ENCODE measurements at regions of chr17 and their contacts with region 1.

Region 1: DNA sequence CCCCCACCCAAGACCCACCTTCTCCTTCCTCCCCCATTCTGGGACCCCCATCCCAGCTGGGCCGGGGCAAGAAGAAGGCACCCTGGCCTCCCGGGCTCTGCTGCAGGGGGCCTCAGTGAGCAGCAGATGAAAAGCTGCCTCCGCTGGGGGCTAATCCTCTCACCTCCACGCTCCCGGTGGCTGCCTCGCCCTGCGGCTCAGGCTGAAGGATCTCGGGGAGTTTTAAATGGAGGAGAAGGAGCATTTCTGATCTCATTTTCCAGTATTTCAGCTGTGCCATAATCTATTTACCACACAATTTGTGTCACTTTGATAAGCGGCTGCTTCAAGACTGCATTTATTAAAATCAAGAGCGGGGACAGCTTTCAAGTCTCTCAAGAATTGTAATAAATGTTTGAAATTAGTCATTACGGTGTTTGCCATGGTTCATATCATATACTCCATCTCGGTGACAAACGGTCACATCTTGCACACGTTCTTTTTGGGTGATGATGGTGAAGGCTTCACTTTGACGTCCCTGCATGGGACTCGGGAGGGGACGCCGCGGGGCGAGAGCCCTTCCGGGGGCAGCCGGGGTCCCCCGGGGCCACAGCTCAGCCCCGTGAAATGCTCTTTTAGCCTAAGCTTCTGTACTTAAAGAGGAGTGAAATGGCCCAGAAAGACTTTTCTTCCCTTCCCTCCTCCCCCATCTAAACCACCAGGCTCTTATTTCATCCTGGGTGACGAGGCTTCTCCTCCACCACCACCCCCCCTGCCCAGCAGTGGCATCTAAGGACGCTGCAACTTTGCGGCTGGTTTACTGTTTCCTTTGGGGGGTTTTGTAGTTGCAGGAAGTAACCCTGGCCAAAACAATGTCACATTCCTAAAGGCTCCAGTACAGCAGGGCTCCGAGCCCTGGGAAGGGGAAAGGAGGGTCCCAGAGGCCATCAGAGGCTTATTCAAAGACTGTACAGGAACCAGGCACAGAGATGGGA is 313.1 kb upstream of the TNRC6C start:
- DNase-seq: peak; percentile 26 to 84 (median 72)
- ATAC-seq: peak; percentile 86
- H3K4me3 ChIP-seq: peak overlapping the region; percentile 46 to 48
- H3K4me3 Mint-ChIP-seq: peak overlapping the region; percentile 82
- H3K27ac ChIP-seq: peak overlapping the region; percentile 24 to 33
- H3K27ac Mint-ChIP-seq: peak overlapping the region; percentile 92
- H3K4me1 ChIP-seq: peaks cover 22% of the 10 kb centered on the region
- H3K4me1 Mint-ChIP-seq: peaks cover 24% of the 10 kb centered on the region
- H3K27me3 ChIP-seq: no peaks in the 10 kb centered on the region
- H3K27me3 Mint-ChIP-seq: no peaks in the 10 kb centered on the region
- CTCF ChIP-seq: peak; percentile 54

Region 2: GRCh38 chr17:77609553-77610517 is 35.5 kb before region 1 on chr17:
- CTCF ChIA-PET with region 1: interaction called, 11 read pairs
- POLR2A ChIA-PET with region 1: interaction called, 7 read pairs
- intact Hi-C with region 1: no loop called
- DNase-seq: peak; percentile 34 to 88 (median 64)
- ATAC-seq: peak; percentile 96
- H3K4me3 ChIP-seq: peak overlapping the region; percentile 23 to 42
- H3K4me3 Mint-ChIP-seq: peak overlapping the region; percentile 78
- H3K27ac ChIP-seq: peak overlapping the region; percentile 51 to 75
- H3K27ac Mint-ChIP-seq: peak overlapping the region; percentile 90
- H3K4me1 ChIP-seq: peaks cover 22% of the 10 kb centered on the region
- H3K4me1 Mint-ChIP-seq: peaks cover 29% of the 10 kb centered on the region
- H3K27me3 ChIP-seq: no peaks in the 10 kb centered on the region
- H3K27me3 Mint-ChIP-seq: no peaks in the 10 kb centered on the region
- CTCF ChIP-seq: no peak

Region 3: GRCh38 chr17:77666881-77667395 is 21.6 kb after region 1 on chr17:
- CTCF ChIA-PET with region 1: interaction called, 7 read pairs
- POLR2A ChIA-PET with region 1: interaction called, 17 read pairs
- intact Hi-C with region 1: loop called (anchors 1 kb)
- DNase-seq: peak; percentile 33 to 91 (median 71)
- ATAC-seq: peak; percentile 89
- H3K4me3 ChIP-seq: peak overlapping the region; percentile 47 to 53
- H3K4me3 Mint-ChIP-seq: peak overlapping the region; percentile 83
- H3K27ac ChIP-seq: peak overlapping the region; percentile 61 to 87
- H3K27ac Mint-ChIP-seq: peak overlapping the region; percentile 97
- H3K4me1 ChIP-seq: peaks cover 33% of the 10 kb centered on the region
- H3K4me1 Mint-ChIP-seq: peaks cover 58% of the 10 kb centered on the region
- H3K27me3 ChIP-seq: no peaks in the 10 kb centered on the region
- H3K27me3 Mint-ChIP-seq: no peaks in the 10 kb centered on the region
- CTCF ChIP-seq: no peak

Region 4: GRCh38 chr17:77741109-77741508 is 95.8 kb after region 1 on chr17:
- CTCF ChIA-PET with region 1: interaction called, 5 read pairs
- POLR2A ChIA-PET with region 1: no interaction called
- intact Hi-C with region 1: loop called in 1 of 2 experiments (anchors 1 kb)
- DNase-seq: peak; percentile 8 to 62 (median 40)
- ATAC-seq: no peak
- H3K4me3 ChIP-seq: no peak overlapping the region
- H3K4me3 Mint-ChIP-seq: no peak overlapping the region
- H3K27ac ChIP-seq: no peak overlapping the region
- H3K27ac Mint-ChIP-seq: no peak overlapping the region
- H3K4me1 ChIP-seq: no peaks in the 10 kb centered on the region
- H3K4me1 Mint-ChIP-seq: no peaks in the 10 kb centered on the region
- H3K27me3 ChIP-seq: no peaks in the 10 kb centered on the region
- H3K27me3 Mint-ChIP-seq: no peaks in the 10 kb centered on the region
- CTCF ChIP-seq: peak; percentile 59

Region 5: GRCh38 chr17:77881545-77881944 is 236.2 kb after region 1 on chr17:
- CTCF ChIA-PET with region 1: no interaction called
- POLR2A ChIA-PET with region 1: no interaction called
- intact Hi-C with region 1: loop called in 1 of 2 experiments (anchors 5 kb)
- DNase-seq: peak; percentile 57 to 93 (median 76)
- ATAC-seq: peak; percentile 13
- H3K4me3 ChIP-seq: peak overlapping the region; percentile 44
- H3K4me3 Mint-ChIP-seq: peak overlapping the region; percentile 79
- H3K27ac ChIP-seq: peak overlapping the region; percentile 80 to 98
- H3K27ac Mint-ChIP-seq: peak overlapping the region; percentile 98
- H3K4me1 ChIP-seq: peaks cover 83% of the 10 kb centered on the region
- H3K4me1 Mint-ChIP-seq: peaks cover 92% of the 10 kb centered on the region
- H3K27me3 ChIP-seq: no peaks in the 10 kb centered on the region
- H3K27me3 Mint-ChIP-seq: no peaks in the 10 kb centered on the region
- CTCF ChIP-seq: no peak

Measured in CD8-positive, alpha-beta T cell (primary cell).